ENCODE measurements at regions of chr6 and their contacts with region 1.

Region 1: GRCh38 chr6:75493400-75494064 is at the start of gene FILIP1:
- DNase-seq: peak; percentile 59
- H3K4me3 ChIP-seq: peak within 1 kb of the TSS; percentile 71
- H3K27ac ChIP-seq: peak within 1 kb of the TSS; percentile 93
- H3K4me1 ChIP-seq: peaks cover 72% of the 10 kb centered on the region
- H3K27me3 ChIP-seq: no peaks in the 10 kb centered on the region
- CTCF ChIP-seq: no peak
- total RNA-seq, gene FILIP1: 173 TPM

Region 2: GRCh38 chr6:75424618-75425548 is 68.6 kb before region 1 on chr6:
- intact Hi-C with region 1: loop called (anchors 10 kb)
- DNase-seq: no peak
- H3K4me3 ChIP-seq: no peak overlapping the region
- H3K27ac ChIP-seq: peak overlapping the region; percentile 2
- H3K4me1 ChIP-seq: peaks cover 98% of the 10 kb centered on the region
- H3K27me3 ChIP-seq: no peaks in the 10 kb centered on the region
- CTCF ChIP-seq: no peak

Measured in left ventricle myocardium inferior (tissue), 1 donor.